PC-9 (cell line): ENCODE measurements at regions of chr5 and their contacts with region 1.

Region 1: GRCh38 chr5:111863801-111864200 is 106.8 kb upstream of the NREP start:
- DNase-seq: no peak
- H3K4me3 ChIP-seq: no peak overlapping the region
- H3K27ac ChIP-seq: no peak overlapping the region
- H3K4me1 ChIP-seq: no peaks in the 10 kb centered on the region
- H3K27me3 ChIP-seq: no peaks in the 10 kb centered on the region
- CTCF ChIP-seq: no peak

Region 2: DNA sequence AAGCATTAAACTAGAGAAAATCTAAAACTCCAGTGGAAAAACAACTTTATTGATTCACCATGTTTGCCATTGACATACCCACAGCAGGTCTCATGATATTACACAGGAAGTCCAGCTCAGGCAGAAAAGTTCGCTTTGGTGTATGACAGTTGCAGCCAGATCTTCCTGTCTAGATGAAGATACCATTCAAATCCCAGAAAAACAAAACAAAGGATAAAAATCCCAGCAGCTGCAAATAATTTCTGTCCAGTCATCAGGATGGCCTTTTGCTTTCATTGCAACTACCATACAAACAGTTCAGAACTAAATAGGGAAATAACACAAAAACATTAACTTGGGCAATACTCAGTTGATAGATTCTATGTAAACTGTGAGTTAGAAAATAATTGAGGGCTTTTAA is 29.1 kb after region 1 on chr5:
- CTCF ChIA-PET with region 1: no interaction called
- POLR2A ChIA-PET with region 1: no interaction called
- intact Hi-C with region 1: loop called (anchors 2 kb)
- DNase-seq: no peak
- H3K4me3 ChIP-seq: no peak overlapping the region
- H3K27ac ChIP-seq: no peak overlapping the region
- H3K4me1 ChIP-seq: no peaks in the 10 kb centered on the region
- H3K27me3 ChIP-seq: no peaks in the 10 kb centered on the region
- CTCF ChIP-seq: no peak

Region 3: DNA sequence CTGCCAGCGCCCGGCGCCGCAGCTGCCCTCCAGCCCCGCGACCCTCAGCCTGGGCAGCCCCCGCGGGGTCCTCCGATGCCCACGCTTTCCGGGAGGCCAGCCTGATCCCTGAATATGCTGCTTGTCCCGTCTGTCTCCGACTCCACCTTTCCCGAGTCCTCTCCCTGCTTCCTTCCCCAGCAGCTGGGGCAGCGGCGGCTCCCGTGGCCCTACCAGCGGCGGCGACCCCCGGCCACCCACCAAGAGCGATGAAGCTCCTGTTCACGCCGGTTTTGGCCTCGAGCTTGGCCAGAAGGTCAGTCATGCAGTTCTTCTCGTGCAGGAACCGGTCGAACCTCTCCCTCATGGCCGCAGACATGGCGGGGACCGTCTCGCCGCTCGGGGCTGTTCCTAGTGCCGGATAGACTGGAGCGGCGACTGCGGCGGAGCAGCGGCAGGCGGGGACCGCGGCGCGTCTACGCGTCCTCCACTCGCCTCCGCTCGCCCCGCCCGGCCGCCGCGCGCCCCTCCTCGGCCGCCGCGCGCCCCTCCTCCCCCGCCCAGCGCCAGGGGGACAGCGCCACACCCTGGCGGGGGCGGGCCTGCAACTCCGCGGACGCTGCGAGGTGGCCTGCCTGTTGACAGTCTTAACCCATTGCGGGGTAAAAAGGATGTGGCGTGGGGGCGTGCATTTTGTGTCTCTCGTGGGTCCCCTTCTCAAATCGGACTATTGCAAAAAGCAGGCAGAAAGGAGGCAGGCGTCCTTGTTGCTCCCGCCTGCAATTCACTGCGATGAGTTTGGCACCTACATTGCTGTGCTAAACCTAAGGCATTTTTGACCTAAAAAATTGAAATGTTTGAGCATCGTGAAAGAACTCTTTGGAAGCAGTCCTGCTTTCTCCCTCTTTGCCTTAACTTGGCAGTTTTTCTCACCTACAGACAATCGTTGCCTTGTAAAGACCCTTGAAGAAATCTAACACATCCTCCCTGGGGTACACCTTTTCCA is 1058.3 kb after region 1 on chr5 and contains the start of gene REEP5:
- CTCF ChIA-PET with region 1: no interaction called
- POLR2A ChIA-PET with region 1: interaction called, 40 read pairs
- intact Hi-C with region 1: no loop called
- DNase-seq: peak; percentile 66 to 85
- H3K4me3 ChIP-seq: peak within 1 kb of the TSS; percentile 97
- H3K27ac ChIP-seq: peak within 1 kb of the TSS; percentile 53
- H3K4me1 ChIP-seq: peaks cover 7% of the 10 kb centered on the region; the same call in 1 of the 2 replicates
- H3K27me3 ChIP-seq: no peaks in the 10 kb centered on the region
- CTCF ChIP-seq: peak; percentile 57
- total RNA-seq, gene REEP5: 45.2 and 53.6 TPM in 2 replicates